ENCODE measurements at regions of chr2 and their contacts with region 1.

Region 1: DNA sequence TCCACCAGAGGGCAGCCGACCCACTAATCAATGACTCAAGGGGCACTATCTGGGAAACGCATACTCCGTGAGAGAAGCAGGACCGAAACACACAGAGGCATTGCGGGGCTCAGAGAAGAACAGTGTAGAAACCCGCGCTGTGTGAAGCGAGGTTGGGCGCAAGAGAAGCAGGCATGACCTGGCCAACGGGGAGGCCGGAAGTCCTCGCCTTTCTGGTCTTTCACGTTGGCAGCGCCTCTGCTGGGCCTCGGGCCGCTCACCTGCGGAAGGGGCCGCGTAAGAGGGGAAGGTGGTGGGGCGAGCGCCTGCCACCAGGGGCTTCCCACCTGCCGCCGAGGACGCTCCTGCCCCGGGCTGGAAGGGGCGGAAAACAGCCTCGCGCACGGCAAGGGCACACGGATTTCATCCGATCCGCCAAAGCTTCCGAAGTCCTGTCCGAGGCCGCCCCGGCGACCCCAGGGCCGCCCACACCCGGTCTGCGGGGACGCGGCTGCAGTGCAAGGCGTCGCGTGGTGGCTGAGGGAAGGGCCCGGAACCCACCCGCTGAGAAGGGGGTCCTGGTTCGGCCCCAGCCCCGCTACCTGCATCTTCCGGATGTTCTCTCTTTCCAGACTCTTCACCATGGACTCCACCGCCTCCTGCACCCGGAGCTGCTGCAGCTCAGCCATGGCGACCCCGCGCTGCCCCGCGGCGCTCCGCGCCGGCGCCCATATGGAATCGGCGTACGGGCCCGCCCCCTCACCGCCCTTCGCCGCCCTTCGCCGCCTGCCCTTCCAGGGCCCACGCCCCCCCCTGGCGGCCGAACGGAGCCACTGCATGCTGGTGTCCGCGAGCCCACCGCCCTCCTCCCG is at the start of gene FAM136A:
- H3K4me3 ChIP-seq: peak within 1 kb of the TSS; percentile 65
- H3K27ac ChIP-seq: peak within 1 kb of the TSS; percentile 88
- H3K4me1 ChIP-seq: peaks cover 6% of the 10 kb centered on the region; the same call in 1 of the 2 replicates
- CTCF ChIP-seq: peak; percentile 90

Region 2: DNA sequence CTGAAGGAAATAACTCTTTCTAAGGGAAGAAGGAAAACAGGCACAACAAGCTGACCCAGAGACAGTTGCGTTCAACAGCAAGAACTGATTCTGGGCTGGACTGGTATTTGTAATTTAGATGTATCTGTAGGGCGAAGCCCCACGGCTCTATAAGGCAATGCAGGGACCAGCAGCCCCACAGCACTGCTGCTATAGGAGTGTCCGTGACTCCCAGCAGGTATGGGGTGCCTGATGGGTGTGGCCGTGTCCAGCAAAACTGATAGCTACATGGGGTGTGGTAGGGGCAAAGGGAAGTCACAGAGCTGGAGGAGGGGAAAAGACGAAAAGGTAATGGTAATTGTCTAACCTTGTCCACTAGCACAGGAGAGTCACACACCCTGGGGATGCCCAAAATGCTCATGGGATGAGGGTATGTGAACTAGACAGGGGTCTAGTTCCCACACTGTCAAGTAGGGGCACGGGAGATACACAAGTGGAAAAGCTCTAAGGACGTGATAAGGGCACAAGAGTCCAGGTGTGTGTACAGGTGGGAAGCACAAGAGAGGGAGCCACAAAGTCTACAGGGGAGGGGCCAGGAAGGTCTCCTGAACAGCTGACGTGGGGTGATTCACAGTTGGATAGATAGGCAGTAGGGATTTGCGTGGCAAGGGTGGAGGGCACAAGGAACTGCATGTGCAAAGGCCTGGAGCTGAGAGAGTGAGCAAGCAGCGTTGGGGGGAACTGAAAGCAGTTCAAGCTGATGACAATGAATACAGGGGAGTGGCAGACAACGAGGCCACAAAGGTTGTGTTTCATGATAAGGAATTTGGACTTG is 291.6 kb before region 1 on chr2:
- CTCF ChIA-PET with region 1: no interaction called
- POLR2A ChIA-PET with region 1: no interaction called
- H3K4me3 ChIP-seq: no peak overlapping the region
- H3K27ac ChIP-seq: no peak overlapping the region
- H3K4me1 ChIP-seq: no peaks in the 10 kb centered on the region
- CTCF ChIP-seq: no peak

Region 3: GRCh38 chr2:70248181-70248847 is 53.3 kb before region 1 on chr2 and contains the start of gene TIA1:
- CTCF ChIA-PET with region 1: no interaction called
- POLR2A ChIA-PET with region 1: no interaction called
- H3K4me3 ChIP-seq: peak within 1 kb of the TSS; percentile 89
- H3K27ac ChIP-seq: peak within 1 kb of the TSS; percentile 98
- H3K4me1 ChIP-seq: no peaks in the 10 kb centered on the region; the same call in 1 of the 2 replicates
- CTCF ChIP-seq: no peak; the same call in 1 of the 2 replicates

Region 4: DNA sequence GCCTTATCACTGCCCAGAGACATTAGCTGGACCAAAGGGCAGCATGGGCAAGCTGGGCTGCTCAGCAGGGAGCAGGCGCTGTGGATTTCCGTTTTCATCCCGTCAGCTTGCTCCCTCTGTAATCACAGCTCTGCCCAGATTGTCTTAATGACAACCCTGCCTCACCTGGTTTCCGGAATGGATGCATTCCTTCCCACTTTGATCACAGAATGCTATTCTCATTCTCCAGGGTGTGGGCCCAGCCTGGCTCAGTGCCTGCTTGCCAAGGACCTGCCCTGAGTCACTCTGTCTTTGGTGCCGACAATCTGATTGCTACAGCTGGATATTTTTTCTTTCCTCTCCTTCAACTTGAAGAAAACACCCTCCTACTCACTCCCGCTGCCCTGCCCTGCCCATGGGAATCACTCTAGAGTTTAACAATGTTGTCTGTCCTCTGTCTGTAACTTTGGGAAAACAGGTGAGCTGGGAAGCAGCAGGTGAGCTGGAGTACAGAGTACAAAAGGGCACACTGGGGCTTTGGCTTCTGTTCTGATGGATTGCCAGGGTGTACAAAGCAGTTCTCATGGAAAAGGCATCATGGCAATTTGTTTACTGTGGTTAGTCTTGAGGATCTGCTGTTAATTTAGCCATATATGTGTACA is 27.5 kb after region 1 on chr2:
- CTCF ChIA-PET with region 1: interaction called, 15 read pairs
- POLR2A ChIA-PET with region 1: no interaction called
- H3K4me3 ChIP-seq: no peak overlapping the region
- H3K27ac ChIP-seq: no peak overlapping the region
- H3K4me1 ChIP-seq: no peaks in the 10 kb centered on the region; the same call in 1 of the 2 replicates
- CTCF ChIP-seq: no peak

Region 5: GRCh38 chr2:70347831-70348230 is 46.3 kb after region 1 on chr2:
- CTCF ChIA-PET with region 1: interaction called, 11 read pairs
- POLR2A ChIA-PET with region 1: no interaction called
- H3K4me3 ChIP-seq: no peak overlapping the region
- H3K27ac ChIP-seq: no peak overlapping the region
- H3K4me1 ChIP-seq: no peaks in the 10 kb centered on the region
- CTCF ChIP-seq: no peak

Region 6: GRCh38 chr2:70641263-70641784 is 339.8 kb after region 1 on chr2:
- CTCF ChIA-PET with region 1: interaction called, 163 read pairs
- POLR2A ChIA-PET with region 1: interaction called, 3 read pairs
- H3K4me3 ChIP-seq: no peak overlapping the region
- H3K27ac ChIP-seq: no peak overlapping the region
- H3K4me1 ChIP-seq: no peaks in the 10 kb centered on the region
- CTCF ChIP-seq: no peak